Caco-2 (cell line): ENCODE measurements at regions of chrX and their contacts with region 1.

Region 1: DNA sequence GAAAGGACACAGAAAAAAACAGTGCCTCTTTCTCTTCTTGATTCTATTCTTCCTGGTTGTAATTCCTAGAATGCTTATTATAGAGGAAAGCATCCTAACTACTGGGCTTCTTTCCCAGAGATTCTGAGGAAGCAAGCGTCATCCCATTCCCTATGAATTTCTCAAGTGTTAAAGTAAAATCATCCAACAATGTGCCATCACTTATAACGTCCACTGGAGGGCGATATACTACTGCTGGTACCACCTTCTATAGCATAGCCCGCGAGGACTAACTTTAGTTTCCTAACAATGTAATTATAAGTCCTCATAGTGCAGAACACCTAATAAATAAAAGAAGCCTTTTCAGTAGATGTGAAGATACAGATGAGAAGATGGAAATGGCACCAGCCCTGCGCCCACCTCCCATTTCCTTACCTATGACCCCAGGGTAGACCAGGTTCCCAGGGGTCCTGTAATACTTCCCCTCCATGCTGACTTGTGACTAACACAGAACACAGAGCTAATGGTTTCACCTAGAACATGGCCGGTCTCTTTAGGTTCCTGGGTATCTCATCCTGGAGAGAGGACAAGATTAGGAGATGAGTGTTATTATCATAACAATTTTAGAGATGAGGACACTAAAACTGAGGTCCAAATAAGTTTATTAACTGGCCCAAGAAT is 4.2 kb downstream of the CENPVL3 start:
- DNase-seq: peak in 1 of 2 experiments; percentile 4
- H3K4me3 ChIP-seq: no peak overlapping the region
- H3K4me3 Mint-ChIP-seq: no peak overlapping the region
- H3K27ac Mint-ChIP-seq: no peak overlapping the region
- H3K4me1 ChIP-seq: no peaks in the 10 kb centered on the region
- H3K4me1 Mint-ChIP-seq: no peaks in the 10 kb centered on the region
- H3K27me3 ChIP-seq: no peaks in the 10 kb centered on the region
- H3K27me3 Mint-ChIP-seq: peaks cover 4% of the 10 kb centered on the region
- CTCF ChIP-seq: peak; percentile 22 to 47

Region 2: DNA sequence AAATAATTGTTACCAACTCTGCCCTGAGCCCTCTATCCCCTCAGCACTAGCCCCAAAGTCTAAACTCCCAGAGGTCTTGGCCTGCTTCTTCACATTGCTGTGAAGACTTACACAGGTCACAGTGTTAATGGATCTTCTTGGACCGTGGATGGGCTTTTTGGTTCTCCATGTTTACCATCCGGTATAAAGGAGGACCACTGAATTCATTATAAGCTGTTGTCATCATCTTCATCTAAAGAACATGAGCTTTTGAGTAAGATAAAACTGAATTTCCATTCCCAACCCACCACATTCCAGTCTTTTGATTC is 126.6 kb before region 1 on chrX:
- CTCF ChIA-PET with region 1: no interaction called
- POLR2A ChIA-PET with region 1: no interaction called
- intact Hi-C with region 1: loop called (anchors 10 kb)
- DNase-seq: no peak
- H3K4me3 ChIP-seq: no peak overlapping the region
- H3K4me3 Mint-ChIP-seq: no peak overlapping the region
- H3K27ac Mint-ChIP-seq: no peak overlapping the region
- H3K4me1 ChIP-seq: no peaks in the 10 kb centered on the region
- H3K4me1 Mint-ChIP-seq: no peaks in the 10 kb centered on the region
- H3K27me3 ChIP-seq: no peaks in the 10 kb centered on the region
- H3K27me3 Mint-ChIP-seq: peaks cover 4% of the 10 kb centered on the region
- CTCF ChIP-seq: no peak

Region 3: GRCh38 chrX:51665981-51666380 is 51.5 kb after region 1 on chrX:
- CTCF ChIA-PET with region 1: no interaction called
- POLR2A ChIA-PET with region 1: no interaction called
- intact Hi-C with region 1: no loop called
- DNase-seq: no peak
- H3K4me3 ChIP-seq: no peak overlapping the region
- H3K4me3 Mint-ChIP-seq: no peak overlapping the region
- H3K27ac Mint-ChIP-seq: no peak overlapping the region
- H3K4me1 ChIP-seq: no peaks in the 10 kb centered on the region
- H3K4me1 Mint-ChIP-seq: no peaks in the 10 kb centered on the region
- H3K27me3 ChIP-seq: no peaks in the 10 kb centered on the region
- H3K27me3 Mint-ChIP-seq: no peaks in the 10 kb centered on the region
- CTCF ChIP-seq: no peak

Region 4: DNA sequence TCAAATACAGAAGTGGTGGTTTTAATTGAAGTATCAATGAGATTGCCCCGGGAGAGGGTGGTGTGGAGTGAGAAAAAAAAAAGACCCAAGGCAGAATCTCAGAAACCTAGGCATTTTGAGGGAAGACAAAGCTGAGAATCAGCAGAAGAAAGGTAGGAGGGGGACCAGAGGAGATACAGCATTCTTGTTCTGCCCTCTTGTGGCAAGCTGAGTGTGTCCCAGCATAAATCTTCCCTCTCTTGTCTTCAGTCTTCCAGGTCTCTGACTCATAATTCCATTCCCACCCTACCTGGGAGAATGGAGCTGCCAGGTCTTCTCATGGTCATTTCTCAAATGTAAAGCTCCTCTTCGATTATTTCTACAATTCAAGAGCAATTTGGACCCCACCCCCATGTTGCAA is 246.2 kb after region 1 on chrX:
- CTCF ChIA-PET with region 1: no interaction called
- POLR2A ChIA-PET with region 1: no interaction called
- intact Hi-C with region 1: loop called (anchors 1 kb)
- DNase-seq: peak; percentile 30 to 36
- H3K4me3 ChIP-seq: no peak overlapping the region
- H3K4me3 Mint-ChIP-seq: no peak overlapping the region
- H3K27ac Mint-ChIP-seq: no peak overlapping the region
- H3K4me1 ChIP-seq: no peaks in the 10 kb centered on the region
- H3K4me1 Mint-ChIP-seq: peaks cover 8% of the 10 kb centered on the region
- H3K27me3 ChIP-seq: no peaks in the 10 kb centered on the region
- H3K27me3 Mint-ChIP-seq: no peaks in the 10 kb centered on the region
- CTCF ChIP-seq: peak; percentile 27 to 48

Region 5: DNA sequence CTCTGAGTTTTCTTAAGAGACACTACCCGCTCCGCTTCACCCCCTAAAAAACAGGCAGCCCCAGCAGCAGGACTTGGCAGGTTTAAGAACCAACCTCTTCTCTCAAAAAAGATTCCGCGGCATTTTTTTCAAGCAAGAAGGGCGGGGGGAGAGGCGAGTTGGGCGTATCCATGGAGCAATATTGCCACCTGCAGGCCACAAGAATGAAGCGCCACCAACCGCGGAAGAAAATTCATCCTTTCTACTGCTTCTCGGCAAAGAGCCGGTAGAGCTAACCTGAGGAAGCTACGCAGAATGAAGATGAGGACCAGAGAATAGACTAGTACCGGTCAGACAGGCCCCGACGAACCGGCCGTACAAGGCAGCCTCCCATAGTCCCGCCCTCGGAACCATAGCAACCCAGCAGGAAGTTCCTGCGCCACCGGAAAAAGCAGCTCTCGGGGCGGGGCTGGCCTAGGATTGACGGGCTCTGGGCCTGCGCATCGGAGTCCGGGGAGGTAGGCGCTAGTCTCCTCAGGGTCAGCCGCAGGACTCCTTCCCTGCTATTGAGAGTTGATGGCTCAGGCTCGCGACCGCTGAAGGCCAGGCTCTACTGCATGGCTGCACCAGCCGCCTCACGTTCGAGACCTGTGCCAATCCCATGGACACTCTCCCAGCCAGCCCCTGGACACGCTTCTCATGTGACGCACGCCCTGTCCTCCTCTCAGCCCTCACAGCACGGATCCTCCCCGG is 647.1 kb after region 1 on chrX:
- CTCF ChIA-PET with region 1: no interaction called
- POLR2A ChIA-PET with region 1: no interaction called
- intact Hi-C with region 1: loop called (anchors 1 kb)
- DNase-seq: peak; percentile 86 to 90
- H3K4me3 ChIP-seq: peak overlapping the region; percentile 63
- H3K4me3 Mint-ChIP-seq: peak overlapping the region; percentile 88
- H3K27ac Mint-ChIP-seq: peak overlapping the region; percentile 90
- H3K4me1 ChIP-seq: peaks cover 18% of the 10 kb centered on the region
- H3K4me1 Mint-ChIP-seq: peaks cover 7% of the 10 kb centered on the region
- H3K27me3 ChIP-seq: no peaks in the 10 kb centered on the region
- H3K27me3 Mint-ChIP-seq: peaks cover 3% of the 10 kb centered on the region
- CTCF ChIP-seq: peak; percentile 68 to 87